ENCODE measurements at regions of chr1 and their contacts with region 1.

Region 1: DNA sequence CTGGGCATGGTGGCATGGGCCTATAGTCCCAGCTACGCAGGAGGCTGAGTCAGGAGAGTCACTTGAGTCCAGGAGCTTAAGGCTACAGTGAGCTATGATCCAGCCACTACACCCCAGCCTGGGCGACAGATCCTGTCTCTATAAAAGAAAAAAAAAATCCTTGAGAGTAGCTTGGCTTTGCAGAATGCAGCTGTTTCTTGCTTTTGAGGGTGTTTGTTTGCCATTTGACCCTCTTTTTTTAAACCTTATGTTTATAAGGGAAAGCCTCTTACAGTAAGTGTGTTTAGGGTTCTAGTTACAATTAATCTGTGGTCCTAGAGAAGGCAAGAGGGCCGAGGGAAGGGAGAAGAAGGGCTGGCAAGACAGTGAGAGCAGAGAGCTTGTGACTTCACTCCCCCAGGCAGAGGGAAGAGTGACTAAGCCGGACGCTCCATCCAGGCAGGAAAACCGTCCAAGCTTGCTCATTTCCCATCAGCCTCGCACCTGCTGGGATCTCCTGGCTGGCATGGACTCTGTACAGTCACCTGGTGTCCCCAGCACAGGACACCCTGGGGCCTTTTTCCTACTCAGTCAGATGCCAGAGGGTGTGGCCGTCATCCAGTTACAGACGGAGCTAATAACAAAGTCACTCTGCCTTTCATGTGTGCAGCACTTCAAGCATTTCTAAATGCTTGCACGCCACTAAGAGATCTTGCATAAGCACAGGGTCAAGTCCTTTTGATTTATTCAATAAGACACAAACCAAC is 55.5 kb upstream of the PSEN2 start:
- DNase-seq: peak; percentile 89
- H3K4me3 ChIP-seq: no peak overlapping the region
- H3K27ac ChIP-seq: peak overlapping the region; percentile 68
- H3K4me1 ChIP-seq: peaks cover 32% of the 10 kb centered on the region
- H3K27me3 ChIP-seq: no peaks in the 10 kb centered on the region
- CTCF ChIP-seq: no peak

Region 2: DNA sequence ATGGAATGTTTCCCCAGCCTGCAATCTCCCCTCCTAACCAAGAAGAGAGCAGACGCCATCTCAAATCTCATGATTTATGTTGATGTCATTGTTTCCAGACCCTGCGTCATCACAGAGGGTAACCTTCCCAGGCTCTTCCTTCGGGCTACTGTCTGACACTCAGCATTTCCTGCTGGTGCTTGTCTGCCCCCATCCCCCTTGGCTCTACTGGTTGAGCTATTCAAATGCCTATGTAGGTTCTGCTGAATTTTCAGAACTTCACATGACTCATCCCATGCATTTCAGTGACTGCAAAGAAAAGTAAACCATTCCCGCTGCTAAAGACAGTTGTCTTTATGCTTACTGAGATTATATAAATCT is 51.0 kb before region 1 on chr1:
- CTCF ChIA-PET with region 1: no interaction called
- dilution Hi-C with region 1: no loop called
- in situ Hi-C with region 1: no loop called
- intact Hi-C with region 1: loop called (anchors 1 kb)
- DNase-seq: peak; percentile 89
- H3K4me3 ChIP-seq: no peak overlapping the region
- H3K27ac ChIP-seq: no peak overlapping the region
- H3K4me1 ChIP-seq: no peaks in the 10 kb centered on the region
- H3K27me3 ChIP-seq: no peaks in the 10 kb centered on the region
- CTCF ChIP-seq: no peak

Region 3: DNA sequence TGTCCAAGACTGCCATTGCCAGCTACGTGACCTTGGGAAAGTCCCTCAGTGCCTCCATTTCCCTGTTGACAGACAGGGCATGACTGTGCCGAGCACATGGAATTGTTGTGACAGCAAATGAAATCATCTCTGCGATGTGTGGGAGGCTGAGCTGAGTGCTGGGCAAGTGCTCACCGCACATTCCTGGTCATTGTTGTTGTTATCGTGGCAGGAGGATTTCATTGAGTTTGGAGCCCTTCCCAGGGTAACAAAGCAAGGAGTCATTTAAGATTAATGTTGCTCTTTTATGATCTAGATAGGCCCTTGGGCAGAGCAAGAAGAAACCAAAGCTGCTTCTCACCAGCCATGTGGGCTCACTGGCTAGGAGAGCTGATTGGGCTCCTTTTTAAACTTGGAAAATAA is 36.3 kb before region 1 on chr1:
- CTCF ChIA-PET with region 1: no interaction called
- dilution Hi-C with region 1: no loop called
- in situ Hi-C with region 1: no loop called
- intact Hi-C with region 1: loop called (anchors 2 kb)
- DNase-seq: peak; percentile 94
- H3K4me3 ChIP-seq: no peak overlapping the region
- H3K27ac ChIP-seq: no peak overlapping the region
- H3K4me1 ChIP-seq: peaks cover 9% of the 10 kb centered on the region
- H3K27me3 ChIP-seq: peaks cover 3% of the 10 kb centered on the region
- CTCF ChIP-seq: no peak

Region 4: GRCh38 chr1:227357171-227357880 is 542.4 kb after region 1 on chr1:
- CTCF ChIA-PET with region 1: no interaction called
- dilution Hi-C with region 1: no loop called
- in situ Hi-C with region 1: no loop called
- intact Hi-C with region 1: no loop called
- DNase-seq: peak; percentile 70
- H3K4me3 ChIP-seq: no peak overlapping the region
- H3K27ac ChIP-seq: peak overlapping the region; percentile 77
- H3K4me1 ChIP-seq: peaks cover 19% of the 10 kb centered on the region
- H3K27me3 ChIP-seq: no peaks in the 10 kb centered on the region
- CTCF ChIP-seq: no peak